WTC11 (cell line): ENCODE measurements at regions of chr1 and their contacts with region 1.

Region 1: DNA sequence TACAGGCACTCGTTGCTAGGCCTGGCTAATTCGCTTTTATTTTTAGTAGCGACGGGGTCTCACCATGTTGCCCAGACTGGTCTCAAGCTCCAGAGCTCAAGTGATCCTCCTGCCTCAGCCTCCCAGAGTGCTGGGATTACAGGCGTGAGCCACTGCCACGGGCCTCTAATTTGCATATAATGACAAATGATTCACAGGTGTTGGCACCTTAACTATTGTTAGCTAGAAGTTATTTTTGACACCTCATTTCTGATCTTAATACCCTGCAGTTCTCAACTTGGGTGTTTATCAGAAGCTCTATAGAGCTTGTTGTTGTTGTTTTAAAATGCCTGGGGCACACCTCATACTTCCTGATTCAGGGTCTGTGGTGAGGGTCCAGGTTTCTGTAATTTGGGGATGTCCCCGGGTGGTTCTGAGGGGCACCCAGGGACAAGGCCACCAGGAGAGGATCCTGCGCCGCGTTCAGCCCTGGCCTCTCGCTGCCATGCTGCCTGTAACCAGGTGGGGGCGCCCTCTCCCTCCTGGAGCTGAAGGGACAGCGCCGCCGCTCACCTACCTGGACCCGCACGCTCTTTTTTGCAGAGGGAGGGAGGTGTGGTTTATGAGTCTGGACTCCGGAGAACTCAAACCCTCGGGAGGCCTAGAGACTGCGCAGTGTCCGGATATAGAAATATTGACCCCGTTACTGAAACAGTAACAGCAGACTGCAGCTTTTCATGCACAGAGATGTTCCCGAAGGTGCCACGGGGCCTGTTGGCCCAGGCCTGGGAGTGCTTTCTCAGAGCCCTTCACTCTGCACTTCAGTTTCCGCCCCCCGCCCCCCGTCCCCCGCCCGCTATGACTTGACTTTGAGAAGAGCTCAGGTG is 23.0 kb upstream of the NEK2 start:
- DNase-seq: peak; percentile 91
- ATAC-seq: peak; percentile 95
- H3K4me3 Mint-ChIP-seq: peak overlapping the region; percentile 80
- H3K27ac Mint-ChIP-seq: no peak overlapping the region
- H3K4me1 Mint-ChIP-seq: peaks cover 4% of the 10 kb centered on the region; the same call in 1 of the 2 replicates
- H3K27me3 Mint-ChIP-seq: peaks cover 31% of the 10 kb centered on the region
- CTCF ChIP-seq: peak; percentile 99

Region 2: GRCh38 chr1:211711315-211711705 is 12.9 kb after region 1 on chr1:
- CTCF ChIA-PET with region 1: interaction called, 21 read pairs
- POLR2A ChIA-PET with region 1: no interaction called
- DNase-seq: no peak
- ATAC-seq: no peak
- H3K4me3 Mint-ChIP-seq: no peak overlapping the region
- H3K27ac Mint-ChIP-seq: no peak overlapping the region
- H3K4me1 Mint-ChIP-seq: no peaks in the 10 kb centered on the region
- H3K27me3 Mint-ChIP-seq: peaks cover 5% of the 10 kb centered on the region
- CTCF ChIP-seq: no peak

Region 3: GRCh38 chr1:211829343-211830054 is 131.1 kb after region 1 on chr1:
- CTCF ChIA-PET with region 1: interaction called, 12 read pairs
- POLR2A ChIA-PET with region 1: no interaction called
- DNase-seq: peak; percentile 43
- ATAC-seq: peak; percentile 67
- H3K4me3 Mint-ChIP-seq: peak overlapping the region; percentile 84
- H3K27ac Mint-ChIP-seq: no peak overlapping the region
- H3K4me1 Mint-ChIP-seq: peaks cover 12% of the 10 kb centered on the region
- H3K27me3 Mint-ChIP-seq: peaks cover 18% of the 10 kb centered on the region
- CTCF ChIP-seq: no peak

Region 4: GRCh38 chr1:211928993-211929637 is 230.7 kb after region 1 on chr1:
- CTCF ChIA-PET with region 1: interaction called, 10 read pairs
- POLR2A ChIA-PET with region 1: no interaction called
- DNase-seq: no peak
- ATAC-seq: peak; percentile 47
- H3K4me3 Mint-ChIP-seq: no peak overlapping the region
- H3K27ac Mint-ChIP-seq: no peak overlapping the region; the same call in 1 of the 2 replicates
- H3K4me1 Mint-ChIP-seq: peaks cover 25% of the 10 kb centered on the region
- H3K27me3 Mint-ChIP-seq: no peaks in the 10 kb centered on the region
- CTCF ChIP-seq: no peak